K562 (cell line): ENCODE measurements at regions of chr5 and their contacts with region 1.

Region 1: GRCh38 chr5:6765612-6766525 is 52.6 kb downstream of the TENT4A start:
- DNase-seq: peak; percentile 81 to 86 (median 84)
- ATAC-seq: peak; percentile 93
- H3K4me3 ChIP-seq: no peak overlapping the region
- H3K27ac ChIP-seq: no peak overlapping the region
- H3K4me1 ChIP-seq: peaks cover 0 to 14% of the 10 kb centered on the region in 2 experiments; a peak in 2 of 5 replicates
- H3K27me3 ChIP-seq: peaks cover 17 to 48% of the 10 kb centered on the region in 2 experiments; a peak in 4 of 5 replicates
- CTCF ChIP-seq: peak; percentile 89 to 92 (median 91)
- EP300 ChIP-seq: no peak
- POLR2A ChIP-seq: no peak
- RAD21 ChIP-seq: peak; percentile 44 to 83

Region 2: GRCh38 chr5:6728011-6728794 is 37.7 kb before region 1 on chr5:
- CTCF ChIA-PET with region 1: no interaction called
- POLR2A ChIA-PET with region 1: no interaction called
- in situ Hi-C with region 1: no loop called
- intact Hi-C with region 1: no loop called
- DNase-seq: no peak
- ATAC-seq: peak; percentile 17; the same call in 2 of the 3 replicates
- H3K4me3 ChIP-seq: no peak overlapping the region
- H3K27ac ChIP-seq: no peak overlapping the region
- H3K4me1 ChIP-seq: peaks cover 6 to 24% of the 10 kb centered on the region in 2 experiments; a peak in 4 of 5 replicates
- H3K27me3 ChIP-seq: no peaks in the 10 kb centered on the region
- CTCF ChIP-seq: no peak
- EP300 ChIP-seq: no peak
- POLR2A ChIP-seq: no peak
- RAD21 ChIP-seq: no peak

Region 3: DNA sequence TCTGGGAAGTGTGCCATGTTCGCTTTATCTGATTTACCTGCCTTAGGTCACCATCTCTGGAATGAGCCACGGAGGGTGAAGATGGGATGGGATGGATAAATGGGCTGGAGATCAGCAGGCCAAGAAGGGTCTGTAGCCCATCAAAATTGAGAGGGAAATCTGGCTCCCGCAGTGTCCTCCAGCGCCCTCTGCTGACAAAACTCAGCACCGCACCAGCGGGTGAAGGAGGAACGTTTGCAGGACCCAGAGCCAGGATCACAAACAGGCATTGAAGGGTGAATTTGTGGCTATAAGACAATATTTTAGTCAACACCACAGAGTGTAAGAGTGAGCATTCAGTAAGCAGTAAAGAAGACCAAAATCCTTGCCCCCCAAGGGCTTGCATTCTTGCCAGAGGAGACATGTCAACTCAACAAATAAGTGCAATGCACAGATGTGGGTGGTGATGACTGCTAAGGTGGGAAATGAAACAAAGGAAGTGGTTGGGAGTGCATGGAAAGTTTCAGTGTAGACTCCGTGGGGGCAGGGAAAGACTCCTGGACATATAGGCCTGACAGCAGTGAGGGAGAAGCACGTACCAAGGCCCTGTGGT is 71.7 kb after region 1 on chr5:
- CTCF ChIA-PET with region 1: no interaction called
- POLR2A ChIA-PET with region 1: no interaction called
- in situ Hi-C with region 1: no loop called
- intact Hi-C with region 1: loop called (anchors 1 kb)
- DNase-seq: peak; percentile 52 to 66 (median 56)
- ATAC-seq: peak; percentile 88
- H3K4me3 ChIP-seq: no peak overlapping the region
- H3K27ac ChIP-seq: no peak overlapping the region
- H3K4me1 ChIP-seq: no peaks in the 10 kb centered on the region
- H3K27me3 ChIP-seq: no peaks in the 10 kb centered on the region
- CTCF ChIP-seq: peak; percentile 77 to 94 (median 81)
- EP300 ChIP-seq: no peak
- POLR2A ChIP-seq: no peak
- RAD21 ChIP-seq: peak in 1 of 2 experiments; percentile 62; a peak in 2 of 4 replicates

Region 4: GRCh38 chr5:7066521-7067235 is 300.8 kb after region 1 on chr5:
- CTCF ChIA-PET with region 1: no interaction called
- POLR2A ChIA-PET with region 1: no interaction called
- in situ Hi-C with region 1: no loop called
- intact Hi-C with region 1: no loop called
- DNase-seq: no peak
- ATAC-seq: 0 out of 3 replicates have a peak, but pooled peaks have one; percentile 23
- H3K4me3 ChIP-seq: no peak overlapping the region
- H3K27ac ChIP-seq: no peak overlapping the region
- H3K4me1 ChIP-seq: no peaks in the 10 kb centered on the region
- H3K27me3 ChIP-seq: no peaks in the 10 kb centered on the region; a peak in 1 of 5 replicates
- CTCF ChIP-seq: no peak
- EP300 ChIP-seq: no peak
- POLR2A ChIP-seq: no peak
- RAD21 ChIP-seq: no peak